Posterior cingulate gyrus (tissue), 11 donors: ENCODE measurements at regions of chr12 and their contacts with region 1.

Region 1: GRCh38 chr12:122054842-122055520 is 23.6 kb upstream of the MLXIP start:
- DNase-seq: peak in 1 of 10 donors; percentile 74

Region 2: DNA sequence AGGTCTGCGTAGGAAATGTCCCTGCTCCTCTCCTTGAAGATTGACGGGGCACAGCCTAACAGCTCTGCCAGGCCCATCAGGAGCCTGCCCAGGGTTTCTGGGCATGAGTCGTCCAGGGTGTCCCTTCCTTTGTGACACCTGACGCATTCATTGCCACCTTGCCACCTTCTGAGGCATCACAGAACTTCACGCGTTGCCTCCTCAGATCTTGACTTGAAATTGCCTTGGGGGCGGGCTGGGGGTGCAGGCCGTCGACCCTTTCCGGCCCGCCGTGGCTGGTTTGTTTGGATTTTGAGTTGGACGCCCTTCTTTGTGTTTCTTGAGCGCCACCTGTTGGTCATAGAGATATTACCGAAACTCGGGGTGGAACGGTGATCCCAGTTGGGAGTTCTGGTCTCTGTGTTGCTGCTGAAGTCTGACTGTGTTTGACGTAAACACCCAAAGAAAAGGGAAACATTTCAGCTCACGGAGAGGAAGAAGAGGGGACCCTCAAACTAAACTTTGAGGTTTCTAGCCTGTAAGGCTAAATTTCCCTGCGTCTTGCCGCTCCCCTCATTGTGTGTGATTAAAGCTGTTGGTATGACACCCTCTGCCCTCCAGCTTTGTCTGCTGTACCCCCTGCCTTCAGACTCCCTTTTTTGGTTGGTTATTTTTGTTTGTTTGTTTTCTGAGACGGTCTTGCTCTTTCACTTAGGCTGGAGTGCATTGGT is 68.2 kb after region 1 on chr12:
- intact Hi-C with region 1: loop called (anchors 1 kb)
- DNase-seq: peak in 8 of 10 donors; percentile 57 to 91 (median 77)

Region 3: GRCh38 chr12:122517877-122518276 is 462.9 kb after region 1 on chr12:
- intact Hi-C with region 1: no loop called
- DNase-seq: no peak